IMR-90 (cell line): ENCODE measurements at regions of chr6 and their contacts with region 1.

Region 1: DNA sequence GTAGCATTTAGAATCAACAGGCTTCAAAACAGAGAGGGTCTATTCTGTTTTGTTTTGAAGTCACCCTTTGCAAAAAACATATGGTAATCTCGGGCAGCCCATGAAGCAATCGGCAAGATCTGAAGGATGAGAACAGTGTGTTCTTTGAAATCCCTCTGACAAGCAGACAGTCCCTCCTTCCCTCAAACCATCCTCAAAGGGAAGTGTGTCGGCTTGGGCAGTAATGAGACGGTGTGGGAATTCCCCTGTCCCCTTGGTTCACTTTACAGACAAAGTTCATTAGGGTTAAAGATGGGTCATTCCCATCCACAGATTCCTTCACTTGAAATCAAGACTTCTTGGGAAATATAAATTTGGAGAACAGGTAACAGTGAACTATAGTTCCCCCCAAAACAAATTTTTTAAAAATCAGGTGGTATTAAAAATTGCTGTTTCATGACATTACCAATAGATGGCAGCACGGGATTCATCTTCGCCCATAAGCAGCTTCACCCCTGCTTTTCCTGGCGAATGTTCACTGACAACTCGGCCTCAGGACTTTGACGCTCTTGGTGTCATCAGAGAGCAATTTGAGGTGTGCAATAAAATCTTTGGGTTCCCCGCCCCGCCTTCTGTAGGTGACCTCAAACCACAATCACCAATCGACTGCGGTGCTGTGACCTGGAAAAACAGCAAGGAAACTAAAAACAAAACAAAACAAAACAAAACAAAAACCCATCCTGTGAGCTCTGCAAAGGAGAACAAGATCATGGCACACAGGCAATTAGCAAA is 159.3 kb upstream of the TNFAIP3 start:
- DNase-seq: peak; percentile 86
- ATAC-seq: peak; percentile 78
- H3K4me3 ChIP-seq: no peak overlapping the region; the same call in 1 of the 2 replicates
- H3K27ac ChIP-seq: no peak overlapping the region
- H3K4me1 ChIP-seq: no peaks in the 10 kb centered on the region; the same call in 1 of the 2 replicates
- H3K27me3 ChIP-seq: no peaks in the 10 kb centered on the region
- CTCF ChIP-seq: peak; percentile 89
- POLR2A ChIP-seq: no peak
- RAD21 ChIP-seq: peak; percentile 89

Region 2: DNA sequence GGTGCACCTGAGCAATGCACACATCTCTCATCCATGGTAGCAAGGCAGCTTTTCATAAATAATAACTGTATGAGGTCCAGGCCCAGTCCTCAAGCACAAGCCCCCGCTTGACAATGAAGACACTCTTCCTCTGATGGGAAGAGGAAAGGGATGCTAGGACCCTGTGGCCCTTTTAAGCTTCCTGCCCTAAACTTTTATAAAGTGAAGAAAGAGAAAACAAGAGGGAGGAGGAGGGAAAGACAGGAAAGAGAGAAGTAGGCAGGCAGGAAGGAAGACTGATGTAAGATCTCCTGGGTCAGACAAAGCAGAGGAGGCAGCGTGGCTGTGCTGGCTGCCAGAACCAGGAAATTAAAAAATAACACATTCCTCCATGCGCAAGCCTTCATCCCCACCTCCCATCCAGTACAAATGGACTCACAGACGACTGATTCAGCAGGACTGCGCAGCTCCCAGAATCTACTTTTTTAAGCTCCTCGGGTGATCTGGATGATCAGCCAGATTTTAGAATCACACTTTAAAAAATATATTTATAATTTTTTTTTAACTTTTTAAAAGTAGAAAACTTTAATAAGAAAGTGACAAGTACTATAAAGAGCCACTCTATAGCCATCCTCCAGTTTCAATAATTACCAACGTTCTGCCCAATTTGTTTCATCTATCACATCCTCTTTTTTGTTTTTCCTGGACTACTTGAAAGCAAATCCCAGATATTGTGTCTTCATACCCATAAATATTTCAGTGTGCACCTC is 175.8 kb after region 1 on chr6:
- CTCF ChIA-PET with region 1: no interaction called
- POLR2A ChIA-PET with region 1: no interaction called
- dilution Hi-C with region 1: no loop called
- in situ Hi-C with region 1: no loop called
- intact Hi-C with region 1: no loop called
- DNase-seq: peak; percentile 40
- ATAC-seq: peak; percentile 60
- H3K4me3 ChIP-seq: no peak overlapping the region
- H3K27ac ChIP-seq: peak overlapping the region; percentile 45
- H3K4me1 ChIP-seq: peaks cover 2% of the 10 kb centered on the region
- H3K27me3 ChIP-seq: no peaks in the 10 kb centered on the region
- CTCF ChIP-seq: no peak
- POLR2A ChIP-seq: no peak
- RAD21 ChIP-seq: no peak

Region 3: GRCh38 chr6:137975188-137975940 is 267.6 kb after region 1 on chr6:
- CTCF ChIA-PET with region 1: no interaction called
- POLR2A ChIA-PET with region 1: no interaction called
- dilution Hi-C with region 1: no loop called
- in situ Hi-C with region 1: no loop called
- intact Hi-C with region 1: loop called (anchors 1 kb)
- DNase-seq: peak; percentile 22
- ATAC-seq: no peak
- H3K4me3 ChIP-seq: no peak overlapping the region
- H3K27ac ChIP-seq: no peak overlapping the region
- H3K4me1 ChIP-seq: no peaks in the 10 kb centered on the region
- H3K27me3 ChIP-seq: peaks cover 11% of the 10 kb centered on the region
- CTCF ChIP-seq: peak; percentile 47
- POLR2A ChIP-seq: no peak
- RAD21 ChIP-seq: peak; percentile 49

Region 4: GRCh38 chr6:138109042-138109997 is 401.5 kb after region 1 on chr6:
- CTCF ChIA-PET with region 1: interaction called, 4 read pairs
- POLR2A ChIA-PET with region 1: interaction called, 3 read pairs
- dilution Hi-C with region 1: no loop called
- in situ Hi-C with region 1: no loop called
- intact Hi-C with region 1: loop called (anchors 1 kb)
- DNase-seq: peak; percentile 70
- ATAC-seq: peak; percentile 53; the same call in 1 of the 2 replicates
- H3K4me3 ChIP-seq: no peak overlapping the region
- H3K27ac ChIP-seq: no peak overlapping the region
- H3K4me1 ChIP-seq: peaks cover 9% of the 10 kb centered on the region
- H3K27me3 ChIP-seq: peaks cover 13% of the 10 kb centered on the region
- CTCF ChIP-seq: peak; percentile 98
- POLR2A ChIP-seq: no peak
- RAD21 ChIP-seq: peak; percentile 95